AG04449 (cell line): ENCODE measurements at regions of chr5 and their contacts with region 1.

Region 1: GRCh38 chr5:1763548-1763911 is 36.1 kb downstream of the MRPL36 start:
- DNase-seq: peak; percentile 28
- H3K4me3 ChIP-seq: no peak overlapping the region
- CTCF ChIP-seq: peak; percentile 81

Region 2: GRCh38 chr5:2032432-2032831 is 268.9 kb after region 1 on chr5:
- CTCF ChIA-PET with region 1: interaction called, 38 read pairs
- POLR2A ChIA-PET with region 1: no interaction called
- DNase-seq: no peak
- H3K4me3 ChIP-seq: no peak overlapping the region
- CTCF ChIP-seq: no peak

Region 3: GRCh38 chr5:2038321-2039179 is 275.0 kb after region 1 on chr5:
- CTCF ChIA-PET with region 1: interaction called, 80 read pairs
- POLR2A ChIA-PET with region 1: no interaction called
- DNase-seq: no peak
- H3K4me3 ChIP-seq: peak overlapping the region; percentile 6; the same call in 1 of the 2 replicates
- CTCF ChIP-seq: peak; percentile 88

Region 4: DNA sequence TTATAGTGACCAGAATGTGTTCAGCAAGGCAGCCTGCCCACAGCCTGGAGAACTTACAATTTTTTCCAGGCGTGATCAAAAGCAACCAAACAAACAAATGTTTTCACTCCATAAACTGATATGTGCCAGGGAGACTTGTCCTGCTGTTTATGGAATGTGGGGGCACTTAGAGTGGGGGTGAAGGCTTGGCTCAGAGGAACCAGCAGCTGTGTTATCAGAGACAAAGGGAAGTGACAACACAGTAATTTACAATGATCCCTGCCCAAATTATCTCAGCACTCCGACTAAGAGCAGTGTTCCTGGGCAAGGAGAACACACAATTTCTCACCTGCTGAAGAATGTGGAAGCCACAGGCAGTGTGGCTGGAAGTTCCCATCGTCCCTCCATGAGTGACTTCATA is 548.3 kb after region 1 on chr5:
- CTCF ChIA-PET with region 1: no interaction called
- POLR2A ChIA-PET with region 1: no interaction called
- DNase-seq: no peak
- H3K4me3 ChIP-seq: no peak overlapping the region
- CTCF ChIP-seq: no peak